GM12878 (cell line): ENCODE measurements at regions of chr3 and their contacts with region 1.

Region 1: DNA sequence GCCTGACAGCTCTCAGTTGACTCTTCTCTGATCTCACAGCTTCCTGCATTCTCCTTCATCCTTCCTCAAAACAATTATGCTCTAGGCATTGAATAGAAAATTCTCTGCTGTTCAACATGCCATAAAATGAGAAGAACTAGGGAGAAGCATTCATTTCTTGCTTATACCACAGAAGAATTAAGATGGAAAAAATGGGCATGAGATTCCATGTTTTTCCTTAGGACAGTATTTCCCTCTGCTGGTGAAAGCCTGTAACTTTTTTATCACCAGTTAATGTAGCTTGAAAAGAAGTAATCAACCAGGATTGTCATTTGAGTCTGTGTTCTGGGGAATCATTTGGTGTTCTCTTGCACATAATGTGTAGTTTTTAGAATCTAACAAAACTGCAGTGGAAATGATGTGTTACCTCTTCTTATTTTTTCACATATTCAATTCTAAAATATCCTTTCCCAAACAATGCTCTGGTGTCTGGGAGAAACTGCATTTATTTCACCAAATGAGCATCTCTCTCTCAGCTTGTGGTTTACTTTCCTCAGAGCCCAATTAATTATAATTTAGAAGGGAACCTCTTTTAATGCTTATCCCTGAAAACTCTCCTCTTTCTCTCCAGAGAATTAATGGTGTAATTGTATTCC is 92.8 kb upstream of the DCBLD2 start:
- DNase-seq: no peak
- ATAC-seq: no peak
- H3K4me3 ChIP-seq: no peak overlapping the region
- H3K27ac ChIP-seq: no peak overlapping the region
- H3K4me1 ChIP-seq: no peaks in the 10 kb centered on the region
- H3K27me3 ChIP-seq: no peaks in the 10 kb centered on the region; a peak in 1 of 4 replicates
- CTCF ChIP-seq: peak; percentile 36 to 54 (median 47); a peak in 5 of 6 replicates
- EP300 ChIP-seq: no peak
- POLR2A ChIP-seq: no peak
- RAD21 ChIP-seq: peak; percentile 60

Region 2: DNA sequence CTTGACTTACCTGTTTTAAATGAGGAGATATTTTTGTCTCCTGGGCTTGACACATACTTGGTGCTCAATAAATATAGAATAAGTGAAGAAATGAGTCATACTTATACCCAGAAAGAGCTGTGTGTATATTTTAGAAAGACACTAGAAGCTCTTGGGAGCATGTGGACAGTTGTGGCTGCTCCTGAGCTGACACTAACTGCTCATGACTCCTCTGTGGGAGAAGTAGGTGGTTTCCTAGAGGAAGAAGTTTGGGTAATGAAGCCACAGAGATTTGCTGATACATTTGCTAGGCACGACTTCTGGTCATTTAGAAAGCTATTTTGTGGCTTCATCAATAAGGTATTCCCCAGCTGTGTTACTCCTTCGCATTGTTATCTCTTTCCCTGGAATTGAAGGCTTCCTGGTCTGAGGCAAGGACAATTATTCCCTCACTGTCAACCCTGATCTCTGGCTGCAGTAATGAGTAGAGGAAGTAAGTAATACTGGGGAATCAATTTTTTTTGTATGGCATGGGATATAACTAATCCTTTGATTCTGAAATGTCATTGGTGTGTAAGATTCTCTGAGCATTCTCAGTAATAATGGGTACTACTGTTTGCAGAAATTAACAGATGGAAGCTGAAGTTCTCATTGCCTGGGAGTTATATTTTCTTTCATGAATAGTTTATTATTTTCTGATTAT is 13.2 kb before region 1 on chr3:
- CTCF ChIA-PET with region 1: interaction called, 10 read pairs
- POLR2A ChIA-PET with region 1: no interaction called
- RAD21 ChIA-PET with region 1: interaction called, 6 read pairs
- SMC1A ChIA-PET with region 1: interaction called, 8 read pairs
- in situ Hi-C with region 1: no loop called
- intact Hi-C with region 1: no loop called
- DNase-seq: peak; percentile 79
- ATAC-seq: peak; percentile 93
- H3K4me3 ChIP-seq: no peak overlapping the region
- H3K27ac ChIP-seq: no peak overlapping the region
- H3K4me1 ChIP-seq: no peaks in the 10 kb centered on the region; the same call in 1 of the 2 replicates
- H3K27me3 ChIP-seq: no peaks in the 10 kb centered on the region
- CTCF ChIP-seq: no peak
- EP300 ChIP-seq: peak; percentile 63 to 71; a peak in 3 of 4 replicates
- POLR2A ChIP-seq: no peak
- RAD21 ChIP-seq: no peak

Region 3: DNA sequence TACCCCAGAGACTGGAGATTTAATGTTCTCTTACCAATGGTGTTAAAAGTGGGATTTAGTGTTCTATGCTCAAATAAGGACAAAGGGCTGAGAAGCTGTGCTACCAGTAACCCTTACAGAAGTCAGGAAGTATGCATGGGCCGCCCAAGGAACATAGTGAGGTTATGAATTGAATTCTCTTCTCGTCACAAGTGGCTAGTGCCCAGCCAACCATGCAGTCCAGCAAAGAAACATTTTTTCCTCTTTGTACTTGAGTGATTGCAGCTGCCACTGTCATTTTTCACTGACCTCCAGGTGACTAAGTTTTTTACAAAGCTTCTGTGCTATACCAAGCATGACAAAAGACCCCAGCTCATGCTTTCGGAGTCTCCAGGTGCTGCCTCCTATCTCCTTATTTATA is 17.8 kb after region 1 on chr3:
- CTCF ChIA-PET with region 1: interaction called, 11 read pairs
- POLR2A ChIA-PET with region 1: no interaction called
- RAD21 ChIA-PET with region 1: no interaction called
- SMC1A ChIA-PET with region 1: interaction called, 4 read pairs
- in situ Hi-C with region 1: no loop called
- intact Hi-C with region 1: no loop called
- DNase-seq: peak; percentile 69
- ATAC-seq: peak; percentile 99
- H3K4me3 ChIP-seq: no peak overlapping the region
- H3K27ac ChIP-seq: no peak overlapping the region; the same call in 1 of the 2 replicates
- H3K4me1 ChIP-seq: peaks cover 8% of the 10 kb centered on the region; the same call in 1 of the 2 replicates
- H3K27me3 ChIP-seq: no peaks in the 10 kb centered on the region
- CTCF ChIP-seq: no peak
- EP300 ChIP-seq: peak; percentile 23 to 52; a peak in 1 of 4 replicates
- POLR2A ChIP-seq: no peak
- RAD21 ChIP-seq: no peak

Region 4: DNA sequence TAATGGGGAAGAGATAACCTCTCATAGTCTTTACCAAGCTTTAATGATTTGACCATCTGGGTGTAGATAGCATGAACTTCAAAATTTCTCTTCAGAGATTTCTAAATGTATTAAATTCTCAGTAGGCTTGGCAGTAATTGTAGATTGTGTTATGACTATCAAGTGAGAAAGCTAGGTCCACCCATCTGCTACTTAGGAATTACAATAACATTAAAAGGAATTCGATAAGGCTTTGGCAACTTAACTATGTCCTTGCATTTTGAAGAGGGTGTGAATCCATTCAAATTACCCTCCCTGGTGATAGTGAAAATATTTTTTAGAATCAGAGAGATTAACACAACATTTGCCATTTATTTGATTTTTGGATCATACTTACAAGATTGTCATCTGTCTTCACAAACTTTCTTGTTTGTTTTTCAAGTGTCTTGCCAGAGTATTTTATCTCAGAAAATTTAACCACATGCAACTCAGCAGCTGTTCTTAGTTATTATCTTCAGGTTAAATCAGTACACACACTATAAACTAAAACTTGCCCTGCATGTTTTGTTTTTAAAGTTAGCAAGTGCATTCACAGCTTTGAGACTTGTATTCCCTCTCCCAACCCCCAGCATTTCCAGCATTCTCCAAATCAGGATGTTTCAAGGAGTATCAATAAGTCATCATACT is 574.6 kb after region 1 on chr3:
- CTCF ChIA-PET with region 1: no interaction called
- POLR2A ChIA-PET with region 1: no interaction called
- RAD21 ChIA-PET with region 1: no interaction called
- SMC1A ChIA-PET with region 1: no interaction called
- in situ Hi-C with region 1: no loop called
- intact Hi-C with region 1: no loop called
- DNase-seq: no peak
- ATAC-seq: no peak
- H3K4me3 ChIP-seq: no peak overlapping the region
- H3K27ac ChIP-seq: no peak overlapping the region
- H3K4me1 ChIP-seq: no peaks in the 10 kb centered on the region
- H3K27me3 ChIP-seq: no peaks in the 10 kb centered on the region
- CTCF ChIP-seq: no peak
- EP300 ChIP-seq: no peak
- POLR2A ChIP-seq: no peak
- RAD21 ChIP-seq: no peak